Heart right ventricle (tissue), 16 donors: ENCODE measurements at regions of chr5 and their contacts with region 1.

Region 1: GRCh38 chr5:133754575-133755169 is 142.3 kb upstream of the FSTL4 start:
- DNase-seq: no peak
- ATAC-seq: peak in 2 of 8 donors; percentile 51 to 59
- H3K4me3 ChIP-seq: no peak overlapping the region
- H3K27ac ChIP-seq: no peak overlapping the region
- H3K4me1 ChIP-seq: no peaks in the 10 kb centered on the region
- H3K27me3 ChIP-seq: peaks cover 0 to 36% (median 23%) of the 10 kb centered on the region in 7 donors
- CTCF ChIP-seq: peak in 8 of 9 donors; percentile 17 to 66 (median 60)

Region 2: GRCh38 chr5:133814152-133814551 is 59.5 kb after region 1 on chr5:
- intact Hi-C with region 1: no loop called
- DNase-seq: no peak
- ATAC-seq: no peak
- H3K4me3 ChIP-seq: no peak overlapping the region
- H3K27ac ChIP-seq: no peak overlapping the region
- H3K4me1 ChIP-seq: peaks cover 0 to 18% (median 7%) of the 10 kb centered on the region in 9 donors
- H3K27me3 ChIP-seq: peaks cover 0 to 12% (median 0%) of the 10 kb centered on the region in 7 donors
- CTCF ChIP-seq: no peak

Region 3: GRCh38 chr5:133930061-133930812 is 175.6 kb after region 1 on chr5:
- intact Hi-C with region 1: loop called in 1 of 10 experiments (anchors 10 kb)
- DNase-seq: no peak
- ATAC-seq: peak in 6 of 8 donors; percentile 18 to 51 (median 40)
- H3K4me3 ChIP-seq: peak overlapping the region in 1 of 10 donors; percentile 24
- H3K27ac ChIP-seq: peak overlapping the region in 1 of 10 donors; percentile 62
- H3K4me1 ChIP-seq: peaks cover 0 to 28% (median 5%) of the 10 kb centered on the region in 9 donors
- H3K27me3 ChIP-seq: peaks cover 0 to 7% (median 0%) of the 10 kb centered on the region in 7 donors
- CTCF ChIP-seq: no peak